K562 (cell line): ENCODE measurements at regions of chr10 and their contacts with region 1.

Region 1: GRCh38 chr10:132452631-132453469 is 55.9 kb downstream of the PWWP2B start:
- DNase-seq: peak; percentile 72 to 91 (median 88)
- ATAC-seq: peak; percentile 85
- H3K4me3 ChIP-seq: no peak overlapping the region
- H3K27ac ChIP-seq: no peak overlapping the region; the same call in 2 of the 3 replicates
- H3K4me1 ChIP-seq: peaks cover 13 to 74% of the 10 kb centered on the region in 2 experiments
- H3K27me3 ChIP-seq: no peaks in the 10 kb centered on the region
- CTCF ChIP-seq: peak; percentile 81 to 91 (median 82)
- EP300 ChIP-seq: no peak
- POLR2A ChIP-seq: no peak
- RAD21 ChIP-seq: peak; percentile 95

Region 2: DNA sequence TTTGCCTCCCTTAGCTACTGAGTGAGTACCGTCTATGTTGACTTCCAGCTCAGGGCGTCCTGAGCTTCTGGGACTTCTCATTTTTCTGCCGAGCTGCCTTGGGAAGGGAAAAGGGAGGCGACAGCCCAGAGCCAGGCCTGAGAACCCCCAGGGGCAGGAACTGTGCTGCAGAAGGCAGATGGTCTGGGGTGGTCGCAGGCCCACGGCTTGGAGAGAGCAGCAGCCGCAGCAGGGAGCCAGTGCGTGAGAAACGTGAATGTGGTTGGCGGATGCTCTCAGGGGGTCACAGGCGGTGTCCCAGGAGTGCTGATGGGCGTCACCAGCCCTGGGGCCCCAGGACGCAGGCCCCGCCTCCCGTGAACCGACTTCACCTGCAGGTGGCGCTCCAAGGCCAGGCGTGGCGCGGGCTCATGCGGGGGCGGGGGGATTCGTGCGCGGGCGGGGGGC is 65.1 kb before region 1 on chr10:
- CTCF ChIA-PET with region 1: interaction called, 22 read pairs
- POLR2A ChIA-PET with region 1: interaction called, 4 read pairs
- in situ Hi-C with region 1: loop called (anchors 5 kb)
- intact Hi-C with region 1: loop called (anchors 2 kb)
- DNase-seq: peak; percentile 68 to 89 (median 88)
- ATAC-seq: peak; percentile 77
- H3K4me3 ChIP-seq: no peak overlapping the region
- H3K27ac ChIP-seq: no peak overlapping the region
- H3K4me1 ChIP-seq: peaks cover 0 to 37% of the 10 kb centered on the region in 2 experiments; a peak in 4 of 5 replicates
- H3K27me3 ChIP-seq: no peaks in the 10 kb centered on the region; a peak in 1 of 5 replicates
- CTCF ChIP-seq: peak; percentile 45 to 80 (median 69); a peak in 5 of 6 replicates
- EP300 ChIP-seq: no peak
- POLR2A ChIP-seq: no peak
- RAD21 ChIP-seq: peak; percentile 53 to 66; a peak in 3 of 4 replicates